ENCODE measurements at regions of chr3 and their contacts with region 1.

Region 1: DNA sequence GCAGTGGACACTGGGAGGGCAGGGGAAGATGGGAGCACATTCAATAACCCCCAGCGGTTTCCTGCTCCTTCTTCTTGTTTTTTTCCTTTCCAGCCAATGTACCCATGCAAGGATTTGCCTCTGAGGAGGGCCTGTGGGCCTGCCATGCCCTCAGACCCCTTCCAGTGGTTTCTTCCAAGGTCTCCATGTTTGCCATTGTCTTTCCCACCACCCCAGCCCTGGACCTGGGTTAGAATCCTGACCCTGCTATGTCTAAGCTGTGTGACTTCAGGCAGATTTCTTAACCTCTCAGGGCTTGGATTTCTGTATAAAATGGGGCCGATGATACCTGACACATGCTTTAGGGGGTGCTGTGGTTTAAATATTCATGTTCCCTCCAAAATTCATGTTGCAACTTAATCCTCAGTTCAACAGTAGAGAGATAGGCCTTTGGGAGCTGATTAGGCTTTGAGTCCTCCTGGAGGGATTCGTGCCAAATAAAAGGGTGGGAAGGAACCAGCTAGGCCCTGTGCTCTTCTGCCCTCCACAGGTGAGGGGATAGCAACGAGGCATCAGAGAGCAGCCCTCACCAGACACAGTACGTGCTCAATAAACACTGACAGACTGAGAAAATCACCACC is 46.3 kb upstream of the FLNB start:
- DNase-seq: no peak
- H3K4me3 Mint-ChIP-seq: no peak overlapping the region
- H3K27ac Mint-ChIP-seq: no peak overlapping the region
- H3K4me1 Mint-ChIP-seq: peaks cover 7% of the 10 kb centered on the region
- H3K27me3 Mint-ChIP-seq: no peaks in the 10 kb centered on the region

Region 2: GRCh38 chr3:57998366-57999283 is 36.7 kb after region 1 on chr3:
- CTCF ChIA-PET with region 1: interaction called, 3 read pairs
- intact Hi-C with region 1: loop called (anchors 2 kb)
- DNase-seq: peak; percentile 23
- H3K4me3 Mint-ChIP-seq: peak overlapping the region; percentile 63
- H3K27ac Mint-ChIP-seq: peak overlapping the region; percentile 34
- H3K4me1 Mint-ChIP-seq: peaks cover 13% of the 10 kb centered on the region
- H3K27me3 Mint-ChIP-seq: no peaks in the 10 kb centered on the region

Region 3: DNA sequence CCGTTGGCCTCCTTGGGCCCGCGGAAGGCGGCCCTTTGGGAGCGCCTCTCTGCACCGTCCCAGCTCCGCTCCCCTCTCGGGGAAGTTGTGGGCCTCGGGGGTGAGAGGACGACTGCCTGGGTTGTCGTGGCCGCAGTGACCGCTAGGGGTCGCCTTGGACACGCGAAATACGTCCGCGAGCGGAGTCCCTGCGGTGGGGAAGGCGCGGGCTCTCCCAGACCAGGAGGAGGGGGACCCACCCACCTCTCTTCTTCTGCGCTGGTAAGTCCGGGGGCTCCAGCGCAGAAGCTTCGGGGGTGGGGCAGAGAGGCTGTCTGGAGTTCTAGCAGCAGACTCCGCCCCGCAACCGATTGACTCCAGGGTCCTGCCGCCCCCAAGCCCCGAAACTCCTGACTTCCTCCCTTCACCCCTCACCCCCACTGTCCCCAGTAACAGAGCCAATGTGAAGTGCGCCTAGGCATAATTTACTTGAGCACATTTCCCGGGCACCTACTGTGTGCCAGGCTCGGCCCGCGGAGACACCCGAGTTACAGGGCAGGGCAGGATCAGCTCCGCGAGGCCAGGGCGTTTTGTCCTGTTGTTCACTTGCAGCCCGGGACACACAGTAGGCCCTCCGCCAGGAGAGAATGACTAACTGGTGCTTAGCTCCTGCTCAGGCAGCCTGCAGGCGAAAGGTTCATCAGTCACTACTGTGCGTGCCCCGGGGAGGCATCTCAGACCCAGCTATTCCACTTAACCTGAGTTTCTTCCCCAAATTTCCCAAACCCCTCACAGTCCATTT is 216.0 kb after region 1 on chr3:
- CTCF ChIA-PET with region 1: interaction called, 4 read pairs
- intact Hi-C with region 1: loop called (anchors 1 kb)
- DNase-seq: peak; percentile 95
- H3K4me3 Mint-ChIP-seq: peak overlapping the region; percentile 59
- H3K27ac Mint-ChIP-seq: no peak overlapping the region
- H3K4me1 Mint-ChIP-seq: peaks cover 13% of the 10 kb centered on the region
- H3K27me3 Mint-ChIP-seq: peaks cover 6% of the 10 kb centered on the region

Region 4: DNA sequence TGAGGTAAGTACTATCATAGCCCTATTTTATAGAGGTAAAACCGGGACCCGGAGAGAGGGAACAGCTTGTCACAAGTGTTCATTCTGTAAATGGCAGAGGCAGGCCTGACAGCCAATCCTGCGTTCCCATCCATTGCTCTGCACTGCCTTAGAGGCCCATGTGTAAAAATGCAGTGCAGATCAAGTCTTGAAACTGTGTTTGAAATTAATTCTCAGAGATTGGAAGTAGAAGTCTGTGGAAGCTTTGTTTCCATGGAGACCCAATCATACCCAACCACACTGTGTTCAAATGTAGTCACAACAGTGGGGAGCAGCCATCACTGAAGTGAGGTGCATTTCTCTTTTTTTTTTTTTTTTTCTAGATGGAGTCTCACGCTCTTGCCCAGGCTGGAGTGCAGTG is 261.9 kb after region 1 on chr3:
- CTCF ChIA-PET with region 1: no interaction called
- intact Hi-C with region 1: no loop called
- DNase-seq: no peak
- H3K4me3 Mint-ChIP-seq: no peak overlapping the region
- H3K27ac Mint-ChIP-seq: no peak overlapping the region
- H3K4me1 Mint-ChIP-seq: peaks cover 5% of the 10 kb centered on the region
- H3K27me3 Mint-ChIP-seq: no peaks in the 10 kb centered on the region